Astrocyte of the cerebellum (primary cell): ENCODE measurements at regions of chr2 and their contacts with region 1.

Region 1: GRCh38 chr2:88600038-88600465 is 27.2 kb downstream of the EIF2AK3 start:
- DNase-seq: peak; percentile 95
- H3K4me3 ChIP-seq: no peak overlapping the region
- CTCF ChIP-seq: no peak

Region 2: DNA sequence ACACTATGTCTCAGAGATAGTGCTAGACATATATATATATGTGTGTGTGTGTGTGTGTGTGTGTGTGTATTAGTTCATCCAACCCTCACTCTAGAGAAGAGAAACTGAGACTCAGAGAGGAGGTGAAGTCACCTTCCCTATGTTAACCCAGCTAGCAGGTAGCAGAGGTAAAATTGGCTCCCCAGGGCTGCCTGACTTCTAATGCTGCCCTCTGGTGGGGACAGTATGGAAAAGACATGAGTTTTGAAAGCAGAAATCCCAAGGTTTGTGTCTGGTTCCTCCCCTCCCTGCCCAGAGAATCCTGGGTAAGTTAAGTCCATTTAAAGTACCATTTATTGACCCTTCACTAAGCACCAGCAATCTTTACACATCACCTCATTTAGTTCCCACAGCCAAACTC is 292.2 kb before region 1 on chr2:
- in situ Hi-C with region 1: no loop called
- DNase-seq: no peak
- H3K4me3 ChIP-seq: no peak overlapping the region
- CTCF ChIP-seq: peak; percentile 24

Region 3: DNA sequence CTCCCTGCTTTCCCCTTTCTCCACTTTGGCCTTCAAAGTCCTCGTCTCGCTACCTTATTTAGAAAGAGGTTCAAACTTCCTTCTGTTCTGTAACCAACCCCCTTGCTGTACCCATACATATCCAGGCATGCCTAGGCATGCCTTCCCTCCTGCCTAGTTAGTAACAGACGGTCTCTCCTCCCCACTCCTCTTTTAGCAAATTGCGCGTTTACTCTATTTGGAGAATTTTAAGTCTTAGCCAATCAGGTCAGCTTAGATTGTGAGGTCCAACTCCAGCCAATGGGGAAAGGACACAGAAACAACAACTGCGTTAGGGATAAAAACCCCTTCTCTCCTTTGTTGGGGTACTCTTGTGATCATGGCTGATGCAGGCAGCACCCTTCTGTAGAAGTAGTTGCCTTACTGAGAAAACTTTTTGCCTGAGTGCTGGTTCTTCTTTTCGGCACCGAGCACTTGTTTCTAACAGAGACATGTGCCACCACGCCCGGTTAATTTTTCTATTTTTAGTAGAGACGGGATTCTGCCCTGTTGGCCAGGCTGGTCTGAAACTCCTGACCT is 61.6 kb before region 1 on chr2:
- in situ Hi-C with region 1: no loop called
- DNase-seq: no peak
- H3K4me3 ChIP-seq: no peak overlapping the region
- CTCF ChIP-seq: no peak

Region 4: DNA sequence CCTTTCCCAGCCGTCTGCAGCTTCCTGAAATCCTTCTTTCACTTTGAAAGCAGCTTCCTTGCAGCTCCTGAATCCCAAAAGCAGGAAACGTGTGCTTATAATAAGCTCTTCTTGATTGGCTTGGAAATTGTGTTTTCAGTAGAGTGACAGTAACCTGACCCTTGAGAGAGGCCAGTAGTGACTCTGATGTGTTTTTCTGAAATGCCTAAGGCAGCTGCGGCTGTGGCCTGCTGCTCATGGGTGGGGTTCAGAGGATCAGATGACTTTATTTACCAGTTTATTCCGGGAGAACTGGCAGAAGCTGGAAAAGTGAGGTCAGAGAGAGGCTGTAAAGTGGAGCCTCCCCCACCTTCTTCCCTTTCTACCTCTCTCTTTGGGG is 59.5 kb after region 1 on chr2:
- in situ Hi-C with region 1: loop called (anchors 10 kb)
- DNase-seq: no peak
- H3K4me3 ChIP-seq: no peak overlapping the region
- CTCF ChIP-seq: no peak